Left colon (tissue), 2 donors: ENCODE measurements at regions of chr1 and their contacts with region 1.

Region 1: DNA sequence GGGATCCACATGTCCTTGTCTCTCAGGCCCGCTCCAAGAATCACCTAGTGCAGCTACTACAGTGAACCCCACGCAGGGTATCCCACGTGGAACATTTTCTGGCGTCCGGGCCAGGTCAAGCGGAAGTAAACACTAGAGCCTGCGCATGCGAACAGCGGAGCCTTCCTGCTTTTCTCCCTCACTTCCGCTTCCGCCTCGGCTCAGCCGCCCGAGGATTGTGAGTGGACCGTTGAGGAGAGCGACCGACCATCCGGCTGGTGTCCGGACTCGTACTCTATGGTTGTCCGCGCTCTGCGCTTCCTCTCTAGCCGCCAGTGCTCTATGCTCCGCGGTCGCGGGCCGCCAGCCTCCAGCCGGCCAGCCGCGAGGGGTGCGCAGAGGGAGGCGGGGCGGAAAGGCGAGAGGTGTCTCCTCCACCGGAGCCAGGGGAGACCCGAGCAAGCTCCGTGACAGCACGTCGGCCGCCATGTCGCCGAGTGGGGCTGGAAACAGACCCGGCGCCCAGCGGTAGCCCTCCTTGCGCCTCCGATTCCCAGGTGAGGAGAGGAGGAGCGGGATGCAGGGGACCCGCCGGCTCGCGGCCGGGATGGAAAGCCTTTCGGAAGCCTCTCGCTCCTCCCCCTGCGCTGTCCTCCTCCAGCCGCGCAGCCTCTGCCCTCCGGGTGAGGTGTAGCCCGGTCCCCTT is at the starts of genes CNST and TFB2M:
- DNase-seq: peak; percentile 97 to 99
- ATAC-seq: peak; percentile 88
- total RNA-seq, gene CNST: 40.2 to 45.0 TPM
- total RNA-seq, gene TFB2M: 10.2 to 12.3 TPM

Region 2: DNA sequence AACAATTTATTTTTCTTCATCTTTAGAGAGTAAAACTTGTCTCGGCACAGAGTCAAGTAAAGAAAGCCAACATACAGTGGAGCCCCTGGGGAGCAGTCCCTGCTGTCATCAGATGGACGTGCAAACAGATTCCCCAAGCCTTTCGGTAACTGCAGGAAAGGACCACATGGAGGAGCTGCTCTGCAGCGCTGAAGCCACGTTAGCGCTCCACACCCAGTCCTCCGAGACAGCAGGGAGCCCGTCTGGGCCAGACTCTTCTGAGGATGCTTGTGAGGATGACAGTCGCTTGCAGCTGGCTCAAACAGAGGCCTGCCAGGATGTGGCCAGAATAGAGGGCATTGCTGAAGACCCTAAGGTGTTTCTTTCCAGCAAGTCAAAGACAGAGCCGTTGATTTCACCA is 80.8 kb after region 1 on chr1:
- intact Hi-C with region 1: loop called in 1 of 2 experiments (anchors 10 kb)
- DNase-seq: peak; percentile 39 to 49
- ATAC-seq: peak; percentile 97